Common myeloid progenitor, CD34-positive (primary cell): ENCODE measurements at regions of chr19 and their contacts with region 1.

Region 1: GRCh38 chr19:14517840-14518505 is at the start of gene DNAJB1:
- DNase-seq: peak in 1 of 3 donors; percentile 45
- H3K4me3 ChIP-seq: peak within 1 kb of the TSS; percentile 85 to 96 (median 93)
- H3K27ac ChIP-seq: peak within 1 kb of the TSS; percentile 93 to 96
- H3K4me1 ChIP-seq: peaks cover 2 to 49% (median 26%) of the 10 kb centered on the region in 4 experiments
- H3K27me3 ChIP-seq: no peaks in the 10 kb centered on the region

Region 2: DNA sequence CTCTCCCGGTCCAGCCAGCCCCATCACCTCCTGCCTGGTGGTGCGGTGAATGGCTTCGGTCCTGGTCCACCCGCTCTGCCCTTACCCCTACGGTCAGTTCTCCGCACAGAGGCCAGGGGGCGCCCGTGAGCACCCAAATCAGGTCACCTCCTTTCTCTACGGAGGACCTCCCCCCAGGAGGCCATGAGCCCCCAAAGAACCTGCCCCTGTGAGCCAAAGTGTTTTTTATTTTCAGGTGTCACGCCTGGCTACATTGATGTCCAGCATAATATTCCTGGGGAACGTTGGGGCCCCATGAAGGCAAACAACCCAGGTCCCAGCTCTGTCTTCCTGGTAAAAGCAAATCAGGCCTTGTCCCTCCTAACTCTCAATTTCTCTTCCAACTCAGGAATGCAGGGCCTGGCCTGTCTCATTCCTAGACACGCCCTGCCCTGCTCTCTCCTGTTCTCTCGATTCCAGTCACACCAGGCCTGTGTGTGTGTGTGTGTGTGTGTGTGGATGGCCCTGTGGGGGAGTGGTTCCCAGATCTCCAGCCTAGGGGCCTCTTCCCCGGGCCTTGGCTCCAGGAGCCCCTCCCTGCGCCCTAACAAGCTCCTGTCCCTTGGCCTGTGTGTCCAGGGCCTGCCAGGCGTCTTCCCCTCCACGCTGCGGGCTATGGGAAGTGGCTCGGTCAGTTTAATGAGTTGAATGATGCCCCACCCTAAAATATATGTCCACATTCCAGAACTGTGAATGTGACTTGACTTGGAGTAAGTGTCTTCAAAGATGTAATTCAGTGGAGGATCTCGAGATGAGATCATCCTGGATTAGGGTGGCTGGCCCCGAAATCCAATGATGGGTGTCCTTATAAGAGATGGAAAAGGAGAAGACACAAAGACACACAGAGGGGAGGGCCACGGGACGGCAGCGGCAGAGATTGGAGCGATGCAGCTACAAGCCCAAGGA is 12.2 kb before region 1 on chr19:
- CTCF ChIA-PET with region 1: interaction called, 4 read pairs
- POLR2A ChIA-PET with region 1: interaction called, 32 read pairs
- DNase-seq: peak; percentile 63 to 81 (median 76)
- H3K4me3 ChIP-seq: no peak overlapping the region
- H3K27ac ChIP-seq: no peak overlapping the region
- H3K4me1 ChIP-seq: peaks cover 5 to 11% (median 6%) of the 10 kb centered on the region in 4 experiments
- H3K27me3 ChIP-seq: no peaks in the 10 kb centered on the region

Region 3: DNA sequence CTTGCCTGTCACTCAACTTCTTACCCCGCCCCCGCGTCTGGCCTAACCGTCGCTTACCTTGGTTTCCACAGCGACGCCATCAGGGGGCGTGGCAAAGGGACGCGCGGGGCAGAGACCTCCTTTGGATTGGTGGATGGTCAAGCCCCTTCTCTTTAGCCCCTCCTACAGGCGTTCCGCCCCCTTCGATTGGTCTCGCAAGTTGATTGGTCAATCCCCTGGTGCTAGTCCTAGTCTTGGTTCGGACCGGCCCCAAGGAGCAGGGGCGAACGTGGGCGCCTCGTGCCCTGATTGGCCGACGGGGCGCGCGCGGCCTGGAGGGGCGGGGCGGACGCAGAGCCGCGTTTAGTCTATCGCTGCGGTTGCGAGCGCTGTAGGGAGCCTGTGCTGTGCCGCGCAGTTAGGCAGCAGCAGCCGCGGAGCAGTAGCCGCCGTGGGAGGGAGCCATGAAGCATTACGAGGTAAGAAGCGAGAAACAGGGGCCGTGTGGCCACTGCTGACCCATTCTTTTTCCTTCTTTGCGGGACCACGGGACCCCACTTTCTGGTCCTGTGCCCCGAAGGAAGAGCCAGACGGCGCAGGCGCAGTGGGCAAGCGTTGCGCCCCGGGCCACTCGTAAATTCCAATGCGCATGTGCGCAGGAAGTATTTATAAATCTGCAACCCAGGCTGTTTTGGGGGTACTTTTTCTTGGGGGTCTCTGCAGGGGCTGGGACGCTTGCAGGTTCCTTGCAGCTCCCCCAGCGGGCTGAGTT is 11.5 kb after region 1 on chr19 and contains the start of gene TECR:
- CTCF ChIA-PET with region 1: interaction called, 6 read pairs
- POLR2A ChIA-PET with region 1: interaction called, 12 read pairs
- DNase-seq: peak; percentile 100
- H3K4me3 ChIP-seq: peak within 1 kb of the TSS; percentile 87 to 97 (median 96)
- H3K27ac ChIP-seq: peak within 1 kb of the TSS; percentile 40 to 86
- H3K4me1 ChIP-seq: peaks cover 6 to 26% (median 14%) of the 10 kb centered on the region in 4 experiments
- H3K27me3 ChIP-seq: no peaks in the 10 kb centered on the region

Region 4: GRCh38 chr19:14550201-14550784 is 32.3 kb after region 1 on chr19:
- CTCF ChIA-PET with region 1: interaction called, 13 read pairs
- POLR2A ChIA-PET with region 1: interaction called, 11 read pairs
- DNase-seq: no peak
- H3K4me3 ChIP-seq: no peak overlapping the region
- H3K27ac ChIP-seq: peak overlapping the region in 1 of 2 experiments; percentile 67
- H3K4me1 ChIP-seq: peaks cover 0 to 29% (median 25%) of the 10 kb centered on the region in 4 experiments
- H3K27me3 ChIP-seq: no peaks in the 10 kb centered on the region